ENCODE measurements at regions of chr1 and their contacts with region 1.

Region 1: DNA sequence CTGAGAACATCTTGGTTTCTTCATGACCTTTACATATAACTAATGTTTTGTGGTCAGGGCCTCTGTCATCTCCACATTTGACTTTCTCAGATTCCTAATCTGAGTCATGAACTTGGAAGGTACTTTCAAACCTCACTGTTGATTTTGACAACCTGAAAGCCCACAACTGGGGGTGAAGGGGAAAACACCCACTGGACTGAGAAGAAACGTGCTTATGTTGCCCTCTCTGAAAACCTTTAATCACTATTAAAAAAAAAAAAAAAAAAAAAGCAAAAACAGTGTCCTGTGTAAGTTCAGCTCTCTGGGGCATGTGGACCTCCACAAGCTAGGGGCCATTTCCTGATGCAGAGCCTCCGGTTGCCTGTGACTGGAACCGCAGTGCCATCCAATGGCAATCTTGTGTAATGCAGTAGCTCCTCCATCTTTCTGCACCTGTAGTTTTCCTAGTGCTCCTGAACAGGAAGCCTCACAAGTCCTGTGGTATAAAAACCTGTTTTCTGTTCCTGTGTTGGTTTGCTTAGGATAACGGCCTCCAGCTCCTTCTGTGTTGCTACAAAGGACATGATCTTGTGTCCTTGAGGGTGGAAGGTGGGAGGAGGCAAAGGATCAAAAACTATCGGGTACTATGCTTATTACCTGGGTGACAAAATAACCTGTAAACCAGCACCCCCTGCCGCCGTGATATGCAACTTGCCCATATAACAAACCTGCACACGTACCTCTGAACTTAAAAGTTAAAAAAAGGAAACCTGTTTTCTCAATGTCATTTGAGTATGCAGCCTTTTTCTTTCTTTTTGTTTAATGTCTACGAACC is 124.5 kb downstream of the ZNF648 start:
- DNase-seq: peak; percentile 86
- ATAC-seq: peak; percentile 90
- H3K4me3 ChIP-seq: no peak overlapping the region
- H3K27ac ChIP-seq: peak overlapping the region; percentile 82
- H3K4me1 ChIP-seq: peaks cover 16% of the 10 kb centered on the region
- H3K27me3 ChIP-seq: no peaks in the 10 kb centered on the region
- CTCF ChIP-seq: peak; percentile 83 to 91 (median 84)
- EP300 ChIP-seq: peak; percentile 92 to 95
- POLR2A ChIP-seq: no peak
- RAD21 ChIP-seq: peak; percentile 95

Region 2: DNA sequence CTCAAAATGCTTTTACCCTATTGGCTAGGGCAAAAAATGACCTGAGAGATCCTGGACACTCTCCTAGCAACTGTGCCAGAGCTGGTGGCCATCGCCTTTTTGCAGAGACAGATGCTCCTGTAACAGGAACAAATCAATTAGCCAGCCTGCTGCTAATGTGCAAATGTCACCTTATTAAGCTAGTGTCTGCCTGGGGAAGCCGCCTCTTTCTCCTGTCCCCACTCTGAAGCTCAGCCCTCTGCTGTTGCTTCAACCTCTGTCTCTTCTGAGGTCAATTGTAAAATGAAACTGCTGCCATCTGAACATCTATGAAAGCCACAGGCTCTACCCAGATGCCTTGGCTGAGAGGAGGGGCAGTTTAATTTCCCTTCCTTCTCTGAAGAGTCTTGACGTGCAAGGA is 539.1 kb before region 1 on chr1:
- CTCF ChIA-PET with region 1: no interaction called
- POLR2A ChIA-PET with region 1: no interaction called
- RAD21 ChIA-PET with region 1: interaction called, 10 read pairs
- SMC1A ChIA-PET with region 1: interaction called, 5 read pairs
- in situ Hi-C with region 1: no loop called
- intact Hi-C with region 1: no loop called
- DNase-seq: peak; percentile 34
- ATAC-seq: peak; percentile 87
- H3K4me3 ChIP-seq: no peak overlapping the region
- H3K27ac ChIP-seq: no peak overlapping the region
- H3K4me1 ChIP-seq: peaks cover 20% of the 10 kb centered on the region
- H3K27me3 ChIP-seq: no peaks in the 10 kb centered on the region
- CTCF ChIP-seq: no peak
- EP300 ChIP-seq: no peak
- POLR2A ChIP-seq: no peak
- RAD21 ChIP-seq: no peak

Region 3: DNA sequence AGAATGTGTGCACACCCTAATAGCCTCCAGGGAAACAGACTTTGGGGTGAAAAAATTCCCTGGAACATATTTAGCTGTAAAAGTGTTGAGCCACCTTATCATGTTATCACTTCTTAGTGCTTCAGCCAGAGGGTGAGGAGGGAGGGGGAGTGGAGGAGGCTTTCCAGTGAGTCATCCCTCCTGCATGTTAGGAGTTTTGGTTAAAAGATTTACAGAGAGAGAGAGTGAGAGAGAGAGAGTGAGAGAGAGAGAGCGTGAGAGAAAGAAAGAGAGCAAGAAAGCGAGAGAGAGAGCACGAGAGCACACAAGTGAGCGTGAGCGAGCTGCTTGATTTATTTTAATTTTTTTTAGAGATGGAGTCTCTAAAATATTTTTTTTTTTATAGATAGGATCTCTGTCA is 467.1 kb before region 1 on chr1:
- CTCF ChIA-PET with region 1: interaction called, 319 read pairs
- POLR2A ChIA-PET with region 1: interaction called, 4 read pairs
- RAD21 ChIA-PET with region 1: interaction called, 299 read pairs
- SMC1A ChIA-PET with region 1: interaction called, 260 read pairs
- in situ Hi-C with region 1: loop called (anchors 5 kb)
- intact Hi-C with region 1: no loop called
- DNase-seq: no peak
- ATAC-seq: no peak
- H3K4me3 ChIP-seq: no peak overlapping the region
- H3K27ac ChIP-seq: no peak overlapping the region
- H3K4me1 ChIP-seq: no peaks in the 10 kb centered on the region
- H3K27me3 ChIP-seq: no peaks in the 10 kb centered on the region
- CTCF ChIP-seq: no peak
- EP300 ChIP-seq: no peak
- POLR2A ChIP-seq: no peak
- RAD21 ChIP-seq: no peak

Region 4: DNA sequence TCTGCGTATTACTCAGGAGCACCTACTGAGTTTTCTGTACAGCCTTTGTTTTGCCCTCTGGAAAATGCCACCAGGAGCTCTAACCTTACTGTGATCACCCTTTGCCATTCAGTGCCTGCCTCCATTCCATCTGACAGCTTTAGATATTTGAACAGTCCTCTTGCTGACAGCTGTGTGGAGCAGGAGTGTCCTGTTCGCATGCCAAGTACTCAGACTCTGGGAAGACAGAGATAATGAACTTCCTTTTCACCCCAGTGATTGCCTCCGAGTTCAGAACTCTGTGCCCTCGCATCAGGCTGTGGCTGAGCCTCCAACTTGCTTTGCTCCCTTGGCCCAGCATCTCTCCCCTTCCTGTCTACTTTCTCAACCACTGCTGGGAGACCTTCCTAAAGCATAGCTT is 379.7 kb before region 1 on chr1:
- CTCF ChIA-PET with region 1: interaction called, 8 read pairs
- POLR2A ChIA-PET with region 1: no interaction called
- RAD21 ChIA-PET with region 1: interaction called, 6 read pairs
- SMC1A ChIA-PET with region 1: interaction called, 3 read pairs
- in situ Hi-C with region 1: no loop called
- intact Hi-C with region 1: loop called (anchors 1 kb)
- DNase-seq: no peak
- ATAC-seq: no peak
- H3K4me3 ChIP-seq: no peak overlapping the region
- H3K27ac ChIP-seq: no peak overlapping the region
- H3K4me1 ChIP-seq: no peaks in the 10 kb centered on the region
- H3K27me3 ChIP-seq: no peaks in the 10 kb centered on the region
- CTCF ChIP-seq: no peak
- EP300 ChIP-seq: no peak
- POLR2A ChIP-seq: no peak
- RAD21 ChIP-seq: no peak

Region 5: DNA sequence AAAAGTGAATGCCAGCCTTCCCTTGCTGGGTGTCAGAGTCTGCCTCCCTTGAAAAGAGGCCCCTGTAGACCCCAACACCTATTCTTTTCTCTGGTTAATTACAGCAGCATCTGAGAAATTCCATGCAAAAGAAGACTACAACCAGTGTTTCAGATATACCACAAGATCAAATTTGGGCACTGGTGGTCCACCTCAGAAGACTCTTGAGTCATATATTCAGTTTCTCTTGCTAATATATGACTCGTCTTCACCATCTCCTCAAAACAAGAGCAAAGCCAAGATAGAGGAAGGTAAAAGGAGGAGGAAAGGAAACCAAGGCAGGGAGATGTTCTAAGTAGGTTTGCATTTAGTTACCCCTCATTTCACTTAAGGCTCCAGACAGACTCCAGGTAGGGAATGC is 135.4 kb before region 1 on chr1:
- CTCF ChIA-PET with region 1: no interaction called
- POLR2A ChIA-PET with region 1: no interaction called
- RAD21 ChIA-PET with region 1: interaction called, 3 read pairs
- SMC1A ChIA-PET with region 1: no interaction called
- in situ Hi-C with region 1: no loop called
- intact Hi-C with region 1: loop called (anchors 5 kb)
- DNase-seq: no peak
- ATAC-seq: no peak
- H3K4me3 ChIP-seq: no peak overlapping the region
- H3K27ac ChIP-seq: no peak overlapping the region
- H3K4me1 ChIP-seq: no peaks in the 10 kb centered on the region
- H3K27me3 ChIP-seq: no peaks in the 10 kb centered on the region; a peak in 1 of 4 replicates
- CTCF ChIP-seq: no peak
- EP300 ChIP-seq: no peak
- POLR2A ChIP-seq: no peak
- RAD21 ChIP-seq: no peak

Region 6: GRCh38 chr1:182054698-182055326 is 117.8 kb after region 1 on chr1:
- CTCF ChIA-PET with region 1: interaction called, 63 read pairs
- POLR2A ChIA-PET with region 1: no interaction called
- RAD21 ChIA-PET with region 1: interaction called, 24 read pairs
- SMC1A ChIA-PET with region 1: interaction called, 12 read pairs
- in situ Hi-C with region 1: no loop called
- intact Hi-C with region 1: no loop called
- DNase-seq: peak; percentile 8
- ATAC-seq: peak; percentile 92
- H3K4me3 ChIP-seq: no peak overlapping the region
- H3K27ac ChIP-seq: no peak overlapping the region
- H3K4me1 ChIP-seq: no peaks in the 10 kb centered on the region
- H3K27me3 ChIP-seq: peaks cover 3 to 5% of the 10 kb centered on the region in 2 experiments; a peak in 3 of 4 replicates
- CTCF ChIP-seq: peak; percentile 64 to 72 (median 71); a peak in 5 of 6 replicates
- EP300 ChIP-seq: no peak
- POLR2A ChIP-seq: no peak
- RAD21 ChIP-seq: peak; percentile 83